Activated CD8-positive, alpha-beta memory T cell treated with anti-CD3 and anti-CD28 coated beads, Interleukin-2, amount 10 ng/mL, durations not matched to agents 7 days and 5 days (primary cell): ENCODE measurements at regions of chr1 and their contacts with region 1.

Region 1: DNA sequence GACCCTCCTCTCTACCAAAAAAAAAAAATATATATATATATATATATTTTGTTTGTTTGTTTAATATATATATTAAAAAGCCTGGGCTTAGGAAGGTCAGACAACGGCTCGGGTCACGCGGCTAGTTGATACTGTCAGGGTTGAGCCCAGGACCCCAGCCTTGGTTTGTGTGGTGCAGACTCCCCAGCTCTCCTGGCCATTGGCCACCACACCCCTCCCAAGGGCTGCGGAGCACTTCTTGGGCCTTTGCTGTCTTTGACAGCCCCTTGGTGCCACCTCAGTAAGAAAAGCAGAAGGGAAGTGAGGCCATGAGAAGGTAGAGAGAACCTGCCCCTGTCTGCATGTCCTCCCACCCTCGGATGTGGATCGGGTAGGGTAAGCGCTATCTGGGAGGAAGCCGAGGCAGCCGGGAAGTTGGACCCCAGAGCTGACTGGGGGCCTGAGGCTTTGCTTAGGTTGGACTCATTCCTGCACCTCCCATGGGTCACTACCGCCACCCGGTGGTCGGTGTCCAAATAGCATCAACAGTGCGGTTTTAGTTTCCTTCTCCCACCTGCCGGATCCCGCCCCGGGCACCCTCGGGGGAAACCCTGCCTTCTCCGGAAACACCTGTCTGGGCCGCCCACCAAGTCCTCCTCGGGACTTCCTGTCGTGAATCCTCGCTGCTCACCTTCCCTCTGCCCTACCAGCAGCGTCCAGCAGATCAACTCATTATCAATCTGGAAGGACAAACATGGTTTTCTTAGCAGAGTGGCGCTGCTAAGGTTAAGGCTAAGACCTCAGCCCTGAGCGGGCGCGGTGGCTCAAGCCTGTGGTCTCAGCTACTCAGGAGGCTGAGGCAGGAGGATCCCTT is 29.8 kb upstream of the GNPAT start:
- DNase-seq: peak; percentile 93
- ATAC-seq: peak; percentile 90
- H3K4me3 Mint-ChIP-seq: peak overlapping the region; percentile 73
- H3K27ac Mint-ChIP-seq: no peak overlapping the region
- H3K4me1 Mint-ChIP-seq: peaks cover 8% of the 10 kb centered on the region
- H3K27me3 Mint-ChIP-seq: peaks cover 3% of the 10 kb centered on the region

Region 2: DNA sequence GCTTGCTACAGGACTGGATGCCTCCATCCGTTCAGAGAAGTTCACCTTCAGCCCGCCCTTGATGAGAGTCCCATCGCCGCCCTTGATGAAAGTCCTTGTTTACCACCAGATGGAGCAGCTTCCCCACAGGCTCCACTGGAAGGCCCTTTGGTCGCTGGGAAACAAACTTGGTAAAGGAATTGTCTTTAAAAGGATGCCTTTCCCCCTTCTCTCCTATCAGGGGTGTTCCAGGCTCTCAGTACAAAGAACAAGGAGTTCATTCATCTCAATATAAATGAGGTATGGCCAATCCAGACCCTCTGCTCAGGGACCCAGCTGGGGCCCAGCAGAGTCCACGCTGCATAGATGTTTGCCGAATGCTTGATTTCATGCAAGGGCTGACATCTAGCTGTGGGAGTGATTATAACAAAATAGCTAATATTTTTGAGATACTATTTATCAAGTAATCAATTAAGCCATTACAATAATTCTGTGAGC is 413.3 kb before region 1 on chr1:
- CTCF ChIA-PET with region 1: interaction called, 10 read pairs
- DNase-seq: no peak
- ATAC-seq: no peak
- H3K4me3 Mint-ChIP-seq: no peak overlapping the region
- H3K27ac Mint-ChIP-seq: no peak overlapping the region
- H3K4me1 Mint-ChIP-seq: no peaks in the 10 kb centered on the region
- H3K27me3 Mint-ChIP-seq: peaks cover 10% of the 10 kb centered on the region

Region 3: GRCh38 chr1:230978491-230979388 is 232.5 kb before region 1 on chr1 and contains the starts of genes ARV1 and TTC13:
- CTCF ChIA-PET with region 1: no interaction called
- DNase-seq: peak; percentile 99
- ATAC-seq: peak; percentile 95
- H3K4me3 Mint-ChIP-seq: peak within 1 kb of the TSS; percentile 99
- H3K27ac Mint-ChIP-seq: peak within 1 kb of the TSS; percentile 96
- H3K4me1 Mint-ChIP-seq: peaks cover 33% of the 10 kb centered on the region
- H3K27me3 Mint-ChIP-seq: no peaks in the 10 kb centered on the region
- total RNA-seq, gene ARV1: 12.9 to 16.0 TPM
- total RNA-seq, gene TTC13: 30.8 to 39.2 TPM

Region 4: GRCh38 chr1:231139659-231140654 is 71.3 kb before region 1 on chr1:
- CTCF ChIA-PET with region 1: no interaction called
- DNase-seq: no peak
- ATAC-seq: no peak
- H3K4me3 Mint-ChIP-seq: no peak overlapping the region
- H3K27ac Mint-ChIP-seq: no peak overlapping the region
- H3K4me1 Mint-ChIP-seq: peaks cover 7% of the 10 kb centered on the region
- H3K27me3 Mint-ChIP-seq: peaks cover 33% of the 10 kb centered on the region

Region 5: DNA sequence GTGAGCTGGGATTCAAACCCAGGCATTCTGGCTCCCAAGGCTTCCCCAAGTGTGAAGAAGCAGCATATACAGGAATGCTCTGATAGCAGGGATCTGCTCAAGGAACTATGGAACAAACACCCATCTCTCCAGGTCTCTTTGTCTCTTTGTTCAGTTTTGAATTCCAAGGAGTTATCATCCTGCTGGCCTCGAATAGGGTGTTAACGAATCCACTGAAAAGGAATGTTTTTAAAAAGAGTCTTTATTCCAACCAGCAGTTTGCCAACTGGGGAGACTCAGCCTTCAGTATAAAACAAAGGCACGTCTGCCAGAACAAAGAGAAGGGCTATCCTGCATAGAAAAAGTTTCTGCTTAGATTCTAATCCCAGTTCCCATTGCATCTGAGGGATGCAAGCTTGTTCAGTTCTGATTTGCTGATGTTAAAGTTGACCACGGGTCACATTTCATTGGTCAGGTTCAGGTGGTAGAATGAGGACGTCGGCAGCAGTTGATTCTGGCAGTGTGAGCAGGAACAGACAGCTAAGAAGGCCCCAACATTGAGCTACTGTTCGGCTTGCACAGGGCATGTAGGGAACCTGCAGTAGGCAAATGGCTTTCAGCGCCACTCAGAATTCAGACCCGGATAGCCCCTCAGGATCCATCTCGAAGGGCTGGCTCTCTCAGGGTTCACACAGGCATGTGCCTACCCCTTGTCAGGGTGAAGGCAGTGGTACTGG is 27.2 kb before region 1 on chr1:
- CTCF ChIA-PET with region 1: no interaction called
- DNase-seq: no peak
- ATAC-seq: no peak
- H3K4me3 Mint-ChIP-seq: no peak overlapping the region
- H3K27ac Mint-ChIP-seq: no peak overlapping the region
- H3K4me1 Mint-ChIP-seq: no peaks in the 10 kb centered on the region
- H3K27me3 Mint-ChIP-seq: peaks cover 56% of the 10 kb centered on the region

Region 6: DNA sequence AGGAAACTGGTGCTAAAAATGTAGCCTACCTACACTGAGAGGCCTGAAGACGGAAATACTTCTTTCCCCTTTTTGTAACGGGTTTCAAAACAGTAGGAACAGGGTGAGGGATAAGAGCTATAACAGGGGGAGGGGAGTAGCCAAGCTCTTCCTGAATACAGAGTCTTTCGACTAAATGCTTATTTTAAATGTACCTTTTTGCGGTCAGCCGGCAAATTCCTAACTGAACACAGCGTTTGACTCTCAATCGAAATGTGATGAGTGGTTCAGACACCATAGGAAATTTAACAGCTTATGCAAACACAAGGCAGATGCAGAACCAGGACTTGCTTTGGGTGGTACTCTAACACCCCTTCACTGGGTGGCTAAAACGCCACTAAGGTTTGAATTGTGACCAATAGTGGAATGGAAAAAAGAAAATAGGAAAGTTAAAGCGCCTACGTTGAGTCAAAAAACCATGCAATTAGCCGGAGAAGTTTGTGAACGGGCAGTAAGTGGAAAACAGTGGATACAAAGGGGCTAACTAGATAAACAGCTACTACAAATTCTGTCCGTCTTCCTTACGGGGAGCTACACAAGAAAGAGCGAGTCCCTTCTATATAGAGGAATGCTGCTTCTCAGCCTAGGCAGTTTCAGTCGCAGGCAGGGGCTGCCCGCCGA is 209.2 kb after region 1 on chr1:
- CTCF ChIA-PET with region 1: no interaction called
- DNase-seq: no peak
- ATAC-seq: no peak
- H3K4me3 Mint-ChIP-seq: peak overlapping the region; percentile 88
- H3K27ac Mint-ChIP-seq: peak overlapping the region; percentile 93
- H3K4me1 Mint-ChIP-seq: peaks cover 50% of the 10 kb centered on the region
- H3K27me3 Mint-ChIP-seq: peaks cover 15% of the 10 kb centered on the region